B cell (primary cell): ENCODE measurements at regions of chr10 and their contacts with region 1.

Region 1: DNA sequence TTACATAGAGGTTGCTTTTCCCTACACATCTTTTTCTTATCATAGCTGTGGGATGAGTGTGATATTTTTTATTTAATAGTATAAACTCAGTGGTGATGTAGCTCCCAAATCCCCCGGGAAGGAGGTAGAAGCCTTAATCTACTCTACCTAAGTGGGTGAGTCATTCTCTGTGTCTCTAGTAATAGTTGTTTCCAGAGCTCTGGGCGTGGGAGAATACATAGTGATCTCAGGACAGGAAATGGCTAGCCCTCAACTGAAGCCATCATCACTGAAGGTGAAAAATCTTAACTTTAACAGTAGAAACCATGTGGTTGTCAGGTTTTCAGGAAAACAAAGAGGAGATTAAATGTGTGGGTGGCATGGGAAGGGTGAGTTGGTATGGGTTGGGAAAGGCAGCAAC is 278.4 kb downstream of the ANKRD30A start:
- DNase-seq: no peak
- ATAC-seq: no peak
- H3K4me3 ChIP-seq: no peak overlapping the region
- H3K4me3 Mint-ChIP-seq: no peak overlapping the region
- H3K27ac ChIP-seq: no peak overlapping the region
- H3K27ac Mint-ChIP-seq: no peak overlapping the region
- H3K4me1 ChIP-seq: no peaks in the 10 kb centered on the region
- H3K4me1 Mint-ChIP-seq: no peaks in the 10 kb centered on the region
- H3K27me3 ChIP-seq: no peaks in the 10 kb centered on the region
- H3K27me3 Mint-ChIP-seq: no peaks in the 10 kb centered on the region
- CTCF ChIP-seq: no peak

Region 2: DNA sequence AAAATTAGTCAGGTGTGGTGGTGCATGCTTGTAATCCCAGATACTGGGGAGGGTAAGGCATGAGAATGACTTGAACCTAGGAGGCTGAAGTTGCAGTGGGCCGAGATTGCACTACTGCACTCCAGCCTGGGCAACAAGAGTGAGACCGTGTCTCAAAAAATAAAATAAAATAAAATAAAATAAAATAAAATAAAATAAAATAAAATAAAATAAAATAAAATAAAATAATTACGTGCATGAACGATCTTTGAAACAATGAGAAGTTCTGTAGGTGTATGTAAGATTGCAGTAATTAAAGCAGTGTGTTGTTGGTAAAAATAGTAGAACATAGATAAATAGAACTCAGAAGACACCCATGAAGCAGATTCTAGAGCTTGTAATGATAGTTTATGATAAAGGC is 70.1 kb after region 1 on chr10:
- CTCF ChIA-PET with region 1: no interaction called
- POLR2A ChIA-PET with region 1: no interaction called
- intact Hi-C with region 1: loop called (anchors 2 kb)
- DNase-seq: no peak
- ATAC-seq: no peak
- H3K4me3 ChIP-seq: no peak overlapping the region
- H3K4me3 Mint-ChIP-seq: no peak overlapping the region
- H3K27ac ChIP-seq: no peak overlapping the region
- H3K27ac Mint-ChIP-seq: no peak overlapping the region
- H3K4me1 ChIP-seq: no peaks in the 10 kb centered on the region
- H3K4me1 Mint-ChIP-seq: no peaks in the 10 kb centered on the region
- H3K27me3 ChIP-seq: no peaks in the 10 kb centered on the region
- H3K27me3 Mint-ChIP-seq: no peaks in the 10 kb centered on the region
- CTCF ChIP-seq: no peak

Region 3: GRCh38 chr10:37752334-37752875 is 348.6 kb after region 1 on chr10:
- CTCF ChIA-PET with region 1: no interaction called
- POLR2A ChIA-PET with region 1: no interaction called
- intact Hi-C with region 1: no loop called
- DNase-seq: no peak
- ATAC-seq: no peak
- H3K4me3 ChIP-seq: no peak overlapping the region
- H3K4me3 Mint-ChIP-seq: no peak overlapping the region
- H3K27ac ChIP-seq: no peak overlapping the region
- H3K27ac Mint-ChIP-seq: no peak overlapping the region
- H3K4me1 ChIP-seq: no peaks in the 10 kb centered on the region
- H3K4me1 Mint-ChIP-seq: no peaks in the 10 kb centered on the region
- H3K27me3 ChIP-seq: no peaks in the 10 kb centered on the region
- H3K27me3 Mint-ChIP-seq: no peaks in the 10 kb centered on the region
- CTCF ChIP-seq: no peak